ENCODE measurements at regions of chr6 and their contacts with region 1.

Region 1: DNA sequence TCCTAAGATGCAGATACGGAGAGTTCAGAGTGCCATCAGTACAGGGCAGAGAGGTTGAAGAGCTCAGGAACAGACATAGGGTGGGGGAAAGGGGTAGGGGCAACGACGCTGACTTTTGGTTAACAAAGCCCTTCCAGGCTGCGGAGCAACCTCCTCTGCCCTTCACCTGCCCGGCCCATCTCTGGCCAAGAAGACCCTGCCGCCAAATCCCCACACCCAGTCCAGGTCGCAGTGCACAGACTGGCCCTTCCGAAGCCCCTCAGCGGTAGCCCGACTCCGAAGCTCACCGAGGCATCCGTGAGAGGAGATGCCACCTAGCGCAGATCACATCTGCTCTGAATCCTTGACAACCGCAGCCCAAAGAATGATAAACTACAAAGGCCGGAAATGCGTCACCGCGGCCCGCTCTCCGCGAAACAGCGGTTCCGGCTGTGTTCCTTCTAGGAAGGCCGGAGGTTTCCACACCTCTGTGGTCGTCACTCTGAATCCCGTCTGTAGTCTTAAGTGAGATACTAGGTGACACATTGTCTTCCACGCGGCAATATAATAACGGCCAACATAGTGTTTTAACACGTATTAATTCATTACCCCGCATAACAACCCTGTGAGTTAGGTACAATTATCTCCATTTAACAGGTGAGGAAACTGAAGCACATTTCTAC is at the start of gene ZSCAN23:
- DNase-seq: peak; percentile 59 to 93 (median 88)
- ATAC-seq: peak; percentile 96
- H3K4me3 ChIP-seq: peak within 1 kb of the TSS; percentile 76
- H3K4me3 Mint-ChIP-seq: peak within 1 kb of the TSS; percentile 86 to 98 (median 96)
- H3K27ac ChIP-seq: peak within 1 kb of the TSS; percentile 60
- H3K27ac Mint-ChIP-seq: peak within 1 kb of the TSS; percentile 76 to 97 (median 93)
- H3K4me1 ChIP-seq: peaks cover 13 to 16% of the 10 kb centered on the region in 2 donors
- H3K4me1 Mint-ChIP-seq: peaks cover 15 to 38% (median 32%) of the 10 kb centered on the region in 7 donors
- H3K27me3 ChIP-seq: peaks cover 0 to 6% of the 10 kb centered on the region in 2 donors
- H3K27me3 Mint-ChIP-seq: peaks cover 9 to 36% (median 30%) of the 10 kb centered on the region in 5 donors
- total RNA-seq, gene ZSCAN23: 1.4 to 3.4 (median 2.4) TPM

Region 2: DNA sequence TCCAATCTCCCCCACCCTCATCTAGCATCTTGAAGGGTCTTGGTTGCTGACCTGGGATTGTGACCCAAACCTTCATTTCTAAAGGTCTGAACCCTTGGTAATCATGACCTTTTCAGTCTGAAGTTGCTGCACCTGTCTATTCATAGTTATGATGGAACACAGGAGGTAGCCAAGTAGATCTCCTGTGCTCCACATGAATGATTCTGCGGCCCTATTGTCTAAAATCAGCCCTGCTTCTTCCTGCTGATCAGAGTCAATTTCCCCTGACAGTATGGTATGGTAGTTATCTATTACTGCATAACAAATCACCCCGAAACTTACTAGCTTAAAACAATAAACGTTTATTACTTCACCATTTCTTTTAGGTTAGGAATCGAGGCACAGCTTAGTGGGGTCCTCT is 477.2 kb before region 1 on chr6:
- CTCF ChIA-PET with region 1: no interaction called
- POLR2A ChIA-PET with region 1: no interaction called
- intact Hi-C with region 1: no loop called
- DNase-seq: no peak
- ATAC-seq: no peak
- H3K4me3 ChIP-seq: no peak overlapping the region
- H3K4me3 Mint-ChIP-seq: no peak overlapping the region
- H3K27ac ChIP-seq: no peak overlapping the region
- H3K27ac Mint-ChIP-seq: no peak overlapping the region
- H3K4me1 ChIP-seq: no peaks in the 10 kb centered on the region
- H3K4me1 Mint-ChIP-seq: no peaks in the 10 kb centered on the region
- H3K27me3 ChIP-seq: no peaks in the 10 kb centered on the region
- H3K27me3 Mint-ChIP-seq: peaks cover 0 to 59% (median 45%) of the 10 kb centered on the region in 5 donors

Region 3: DNA sequence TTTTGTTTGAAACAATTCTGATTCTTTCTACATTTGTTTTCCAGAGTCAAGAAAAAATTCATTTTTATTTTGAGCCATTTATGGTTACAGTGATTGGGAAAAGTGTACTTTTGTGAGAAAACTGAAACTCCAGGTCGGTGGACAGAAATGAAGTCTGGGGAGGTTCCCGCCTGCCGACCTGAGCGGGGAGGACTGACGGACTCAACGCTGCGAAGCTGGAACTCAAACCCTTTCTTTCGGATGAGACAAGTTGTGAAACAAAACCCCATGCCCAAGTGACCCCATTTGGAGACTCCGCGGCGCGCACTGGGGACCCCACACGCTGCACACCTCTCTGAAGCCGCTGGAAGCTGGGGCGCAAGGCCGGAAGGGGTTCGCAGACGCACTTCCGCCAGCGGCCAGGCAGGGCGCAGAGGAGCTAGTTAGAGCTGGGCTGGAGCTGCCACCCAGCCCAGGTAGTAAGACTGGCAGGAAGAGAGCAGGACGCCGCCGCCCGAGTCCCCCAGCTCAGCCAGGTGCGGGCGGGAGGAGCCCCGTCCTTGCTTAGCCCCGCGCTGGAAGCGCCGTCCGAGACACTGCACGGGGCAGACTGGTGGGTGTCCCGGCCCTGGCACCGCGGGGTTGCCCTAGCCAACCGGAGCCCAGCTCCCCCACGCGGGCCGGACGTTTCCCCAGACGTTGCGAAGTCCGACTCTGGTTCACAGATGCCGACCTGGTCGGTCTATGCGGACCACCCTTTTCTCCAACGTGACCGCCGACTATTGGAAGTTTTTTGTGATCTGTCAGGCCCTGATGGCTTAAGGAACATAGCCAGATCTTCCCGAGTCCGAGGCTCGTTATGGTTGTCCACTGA is 338.6 kb before region 1 on chr6:
- CTCF ChIA-PET with region 1: no interaction called
- POLR2A ChIA-PET with region 1: no interaction called
- intact Hi-C with region 1: loop called in 1 of 2 experiments (anchors 1 kb)
- DNase-seq: peak; percentile 68 to 82 (median 79)
- ATAC-seq: peak; percentile 99
- H3K4me3 ChIP-seq: peak overlapping the region; percentile 79
- H3K4me3 Mint-ChIP-seq: peak overlapping the region; percentile 86 to 95 (median 92)
- H3K27ac ChIP-seq: peak overlapping the region; percentile 76
- H3K27ac Mint-ChIP-seq: peak overlapping the region; percentile 76 to 96 (median 94)
- H3K4me1 ChIP-seq: peaks cover 0 to 7% of the 10 kb centered on the region in 2 donors
- H3K4me1 Mint-ChIP-seq: peaks cover 6 to 19% (median 9%) of the 10 kb centered on the region in 7 donors
- H3K27me3 ChIP-seq: no peaks in the 10 kb centered on the region
- H3K27me3 Mint-ChIP-seq: peaks cover 0 to 26% (median 16%) of the 10 kb centered on the region in 5 donors

Region 4: GRCh38 chr6:28425944-28426541 is 17.2 kb before region 1 on chr6:
- CTCF ChIA-PET with region 1: no interaction called
- POLR2A ChIA-PET with region 1: no interaction called
- intact Hi-C with region 1: loop called in 1 of 2 experiments (anchors 1 kb)
- DNase-seq: peak in 2 of 9 donors; percentile 11 to 15
- ATAC-seq: no peak
- H3K4me3 ChIP-seq: no peak overlapping the region
- H3K4me3 Mint-ChIP-seq: peak overlapping the region in 9 of 10 donors; percentile 12 to 68 (median 52)
- H3K27ac ChIP-seq: peak overlapping the region; percentile 29
- H3K27ac Mint-ChIP-seq: peak overlapping the region; percentile 77 to 95 (median 83)
- H3K4me1 ChIP-seq: peaks cover 0 to 10% of the 10 kb centered on the region in 2 donors
- H3K4me1 Mint-ChIP-seq: peaks cover 10 to 36% (median 18%) of the 10 kb centered on the region in 7 donors
- H3K27me3 ChIP-seq: no peaks in the 10 kb centered on the region
- H3K27me3 Mint-ChIP-seq: peaks cover 0 to 44% (median 6%) of the 10 kb centered on the region in 5 donors

Region 5: GRCh38 chr6:28553986-28554881 is 111.0 kb after region 1 on chr6:
- CTCF ChIA-PET with region 1: no interaction called
- POLR2A ChIA-PET with region 1: no interaction called
- intact Hi-C with region 1: no loop called
- DNase-seq: no peak
- ATAC-seq: no peak
- H3K4me3 ChIP-seq: no peak overlapping the region
- H3K4me3 Mint-ChIP-seq: no peak overlapping the region
- H3K27ac ChIP-seq: no peak overlapping the region
- H3K27ac Mint-ChIP-seq: no peak overlapping the region
- H3K4me1 ChIP-seq: no peaks in the 10 kb centered on the region
- H3K4me1 Mint-ChIP-seq: peaks cover 0 to 6% (median 0%) of the 10 kb centered on the region in 7 donors
- H3K27me3 ChIP-seq: peaks cover 0 to 6% of the 10 kb centered on the region in 2 donors
- H3K27me3 Mint-ChIP-seq: peaks cover 59 to 75% (median 68%) of the 10 kb centered on the region in 5 donors

Region 6: GRCh38 chr6:28586962-28587745 is 143.9 kb after region 1 on chr6:
- CTCF ChIA-PET with region 1: no interaction called
- POLR2A ChIA-PET with region 1: no interaction called
- intact Hi-C with region 1: loop called in 1 of 2 experiments (anchors 1 kb)
- DNase-seq: peak; percentile 29 to 70 (median 60)
- ATAC-seq: peak; percentile 77
- H3K4me3 ChIP-seq: peak overlapping the region; percentile 54
- H3K4me3 Mint-ChIP-seq: peak overlapping the region; percentile 82 to 90 (median 88)
- H3K27ac ChIP-seq: no peak overlapping the region
- H3K27ac Mint-ChIP-seq: peak overlapping the region in 8 of 9 donors; percentile 5 to 88 (median 60)
- H3K4me1 ChIP-seq: peaks cover 0 to 9% of the 10 kb centered on the region in 2 donors
- H3K4me1 Mint-ChIP-seq: peaks cover 11 to 43% (median 34%) of the 10 kb centered on the region in 7 donors
- H3K27me3 ChIP-seq: peaks cover 10 to 28% of the 10 kb centered on the region in 2 donors
- H3K27me3 Mint-ChIP-seq: peaks cover 57 to 85% (median 76%) of the 10 kb centered on the region in 5 donors

Measured in naive thymus-derived CD4-positive, alpha-beta T cell (primary cell).